Activated CD4-positive, alpha-beta T cell treated with anti-CD3 and anti-CD28 coated beads for 36 hours (primary cell): ENCODE measurements at regions of chr15 and their contacts with region 1.

Region 1: DNA sequence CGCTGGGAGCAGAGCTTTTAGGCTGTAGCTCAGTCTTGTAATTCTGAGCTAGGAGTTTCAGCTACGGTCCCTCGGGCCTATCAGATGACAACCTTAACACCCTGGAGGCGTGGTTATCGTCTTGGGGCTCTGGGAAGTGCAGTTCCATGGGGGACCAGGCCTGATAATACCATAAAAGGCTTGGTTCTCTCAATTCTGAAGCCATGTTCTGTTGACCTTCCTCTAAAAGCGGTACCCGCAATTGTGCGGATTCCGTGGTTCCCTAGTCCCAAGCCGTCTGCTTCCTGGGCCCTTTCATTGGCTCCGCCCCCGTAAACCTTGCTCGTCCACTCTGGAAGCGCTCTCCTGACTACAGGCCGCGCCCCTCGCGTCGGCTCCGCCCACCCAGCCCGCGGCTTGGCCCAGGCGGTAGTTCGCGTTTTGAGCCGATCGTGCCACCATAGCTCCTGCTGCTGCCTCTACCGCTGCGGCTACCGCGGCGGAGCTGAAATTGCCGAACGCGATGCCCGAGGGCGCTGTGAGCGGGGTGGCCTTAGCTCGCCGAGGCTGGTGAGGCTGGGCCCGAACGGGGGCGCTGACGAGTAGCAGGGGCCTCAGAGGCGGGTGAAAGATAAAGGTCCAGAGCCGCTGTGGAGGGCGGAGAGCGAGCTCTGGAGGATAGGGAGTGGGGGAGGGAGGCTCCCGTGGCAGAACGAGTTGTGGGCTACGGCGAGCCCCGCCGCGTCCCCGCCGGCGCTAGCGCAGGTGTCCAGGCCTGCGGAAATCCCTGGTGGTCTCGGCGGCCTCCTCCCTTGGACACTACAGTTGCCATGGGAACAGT is at the start of gene MAPKBP1:
- DNase-seq: peak; percentile 99
- ATAC-seq: peak; percentile 88
- H3K4me3 Mint-ChIP-seq: peak within 1 kb of the TSS; percentile 90
- H3K27ac Mint-ChIP-seq: peak within 1 kb of the TSS; percentile 84
- H3K4me1 Mint-ChIP-seq: peaks cover 56% of the 10 kb centered on the region
- H3K27me3 Mint-ChIP-seq: no peaks in the 10 kb centered on the region
- total RNA-seq, gene MAPKBP1: 16.1 to 19.0 TPM

Region 2: GRCh38 chr15:41493205-41493901 is 280.9 kb before region 1 on chr15 and contains the start of gene ITPKA:
- CTCF ChIA-PET with region 1: no interaction called
- POLR2A ChIA-PET with region 1: interaction called, 3 read pairs
- intact Hi-C with region 1: loop called in 1 of 2 experiments (anchors 1 kb)
- DNase-seq: peak; percentile 97
- ATAC-seq: peak; percentile 85
- H3K4me3 Mint-ChIP-seq: peak within 1 kb of the TSS; percentile 58
- H3K27ac Mint-ChIP-seq: peak within 1 kb of the TSS; percentile 37
- H3K4me1 Mint-ChIP-seq: peaks cover 38% of the 10 kb centered on the region
- H3K27me3 Mint-ChIP-seq: peaks cover 40% of the 10 kb centered on the region
- total RNA-seq, gene ITPKA: 2.5 to 4.2 TPM

Region 3: GRCh38 chr15:41621200-41622193 is 152.8 kb before region 1 on chr15:
- CTCF ChIA-PET with region 1: interaction called, 4 read pairs
- POLR2A ChIA-PET with region 1: no interaction called
- intact Hi-C with region 1: loop called in 1 of 2 experiments (anchors 1 kb)
- DNase-seq: peak; percentile 91
- ATAC-seq: peak; percentile 90
- H3K4me3 Mint-ChIP-seq: peak overlapping the region; percentile 70
- H3K27ac Mint-ChIP-seq: peak overlapping the region; percentile 76
- H3K4me1 Mint-ChIP-seq: peaks cover 11% of the 10 kb centered on the region
- H3K27me3 Mint-ChIP-seq: no peaks in the 10 kb centered on the region

Region 4: DNA sequence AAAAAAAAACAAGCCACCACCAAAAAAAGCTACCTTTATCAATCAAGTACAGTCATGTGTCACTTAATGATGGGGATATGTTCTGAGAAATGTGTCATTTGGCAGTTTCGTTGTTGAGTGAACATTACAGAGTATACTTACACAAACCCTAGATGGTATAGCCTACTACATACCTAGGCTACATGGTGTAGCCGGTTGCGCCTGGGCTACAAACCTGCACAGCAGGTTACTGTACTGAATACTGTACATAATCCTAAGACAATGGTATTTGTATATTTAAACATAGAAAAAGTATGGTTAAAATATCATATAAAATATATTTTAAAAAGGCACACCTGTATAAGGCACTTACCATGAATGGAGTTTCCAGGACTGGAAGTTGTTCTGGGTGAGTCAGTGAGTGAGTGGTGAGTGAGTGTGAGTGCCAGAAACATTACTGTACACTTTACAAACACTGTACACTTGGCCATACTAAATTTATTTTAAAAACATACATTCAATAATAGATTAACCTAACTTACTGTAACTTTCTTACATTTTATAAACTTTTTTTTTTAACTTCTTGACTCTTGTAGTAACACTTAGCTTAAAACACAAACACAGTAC is 27.7 kb after region 1 on chr15:
- CTCF ChIA-PET with region 1: interaction called, 233 read pairs
- POLR2A ChIA-PET with region 1: no interaction called
- intact Hi-C with region 1: no loop called
- DNase-seq: no peak
- ATAC-seq: peak; percentile 37
- H3K4me3 Mint-ChIP-seq: no peak overlapping the region
- H3K27ac Mint-ChIP-seq: no peak overlapping the region
- H3K4me1 Mint-ChIP-seq: peaks cover 17% of the 10 kb centered on the region
- H3K27me3 Mint-ChIP-seq: no peaks in the 10 kb centered on the region

Region 5: DNA sequence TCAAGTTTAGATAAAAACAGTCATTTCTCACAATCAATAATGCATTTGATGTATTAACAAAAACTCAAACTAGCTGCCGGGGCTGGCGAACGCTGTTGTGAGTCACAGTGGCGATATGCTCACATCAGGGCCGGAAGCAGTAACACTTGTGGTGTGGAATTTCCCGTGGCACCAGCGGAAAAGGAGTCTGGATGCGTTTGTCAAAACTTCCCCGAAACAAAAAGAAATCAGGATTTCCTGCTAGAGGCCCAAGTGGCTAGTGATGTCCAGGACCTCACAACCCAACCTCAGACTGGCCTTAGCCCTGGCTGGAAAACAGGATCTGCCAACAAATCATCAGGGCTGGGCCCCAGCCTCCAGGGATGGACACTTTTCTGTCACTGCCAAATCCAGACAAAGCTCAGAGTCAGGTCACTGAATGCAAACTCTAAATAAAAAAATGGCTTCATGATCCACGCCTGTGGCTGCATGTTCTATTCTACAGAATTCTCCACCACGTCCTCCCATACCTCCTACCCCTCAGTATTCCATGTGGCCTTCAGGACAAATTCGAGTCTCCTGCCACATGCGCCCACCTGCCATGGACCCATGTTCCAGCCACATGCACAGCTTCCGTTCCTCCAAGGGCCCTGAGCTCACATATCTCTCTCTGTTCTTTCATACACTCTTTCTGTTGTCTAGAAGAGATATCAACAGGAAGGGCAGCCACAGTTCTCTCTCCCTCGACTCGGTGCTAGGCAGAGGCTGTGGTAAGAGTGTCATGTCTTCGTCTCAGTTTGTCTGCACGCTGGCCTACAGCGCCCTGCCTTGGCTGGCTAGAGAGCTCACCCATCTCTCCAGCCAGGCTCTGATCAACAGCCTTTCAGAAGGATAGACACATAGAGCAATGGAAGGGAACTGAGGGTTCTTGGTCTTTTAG is 162.6 kb after region 1 on chr15:
- CTCF ChIA-PET with region 1: interaction called, 4 read pairs
- POLR2A ChIA-PET with region 1: interaction called, 3 read pairs
- intact Hi-C with region 1: loop called (anchors 1 kb)
- DNase-seq: peak; percentile 91
- ATAC-seq: peak; percentile 62
- H3K4me3 Mint-ChIP-seq: peak overlapping the region; percentile 60
- H3K27ac Mint-ChIP-seq: peak overlapping the region; percentile 100
- H3K4me1 Mint-ChIP-seq: peaks cover 74% of the 10 kb centered on the region
- H3K27me3 Mint-ChIP-seq: no peaks in the 10 kb centered on the region

Region 6: DNA sequence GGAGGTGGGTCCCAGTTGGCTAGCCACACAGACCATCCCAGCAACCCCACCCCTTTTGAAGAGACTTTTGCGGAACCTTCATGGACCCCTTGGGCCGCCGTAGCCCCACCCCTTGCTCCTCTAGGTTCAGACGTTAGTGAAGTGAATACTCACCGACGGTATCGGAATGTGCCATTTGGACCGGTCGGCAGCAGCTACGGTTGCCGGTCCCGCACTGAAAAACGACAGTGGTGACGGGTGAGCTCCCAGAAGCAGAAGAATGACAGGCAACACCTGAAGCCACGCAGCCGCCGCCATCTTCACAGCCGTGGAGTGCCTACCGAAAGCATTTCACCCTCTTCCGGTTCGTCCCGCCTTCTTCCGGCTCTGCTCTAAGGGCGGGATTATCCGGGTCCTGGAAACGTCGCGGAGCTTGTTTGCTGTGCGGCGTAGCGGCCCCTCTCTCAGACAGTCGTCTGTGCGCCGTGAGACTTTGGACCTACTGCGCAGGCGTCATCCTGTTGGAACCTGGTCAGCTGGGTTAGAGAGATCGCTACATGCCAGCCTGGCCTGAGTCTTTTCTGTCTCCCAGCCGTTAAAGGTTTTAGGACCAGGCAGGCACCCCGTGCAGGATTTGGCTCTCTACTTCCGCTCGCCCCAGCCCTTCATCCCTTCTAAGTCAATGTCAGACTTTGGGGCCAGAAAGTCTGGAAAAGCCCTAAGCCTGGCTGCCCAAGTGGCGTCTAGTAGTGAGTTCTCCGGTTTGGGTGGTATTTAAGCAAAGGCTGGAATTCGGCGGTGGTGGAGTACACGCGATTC is 499.0 kb after region 1 on chr15 and contains the starts of genes GANC and TMEM87A:
- CTCF ChIA-PET with region 1: no interaction called
- POLR2A ChIA-PET with region 1: no interaction called
- intact Hi-C with region 1: loop called in 1 of 2 experiments (anchors 1 kb)
- DNase-seq: peak; percentile 98
- ATAC-seq: peak; percentile 96
- H3K4me3 Mint-ChIP-seq: peak within 1 kb of the TSS; percentile 81
- H3K27ac Mint-ChIP-seq: peak within 1 kb of the TSS; percentile 98
- H3K4me1 Mint-ChIP-seq: peaks cover 43% of the 10 kb centered on the region
- H3K27me3 Mint-ChIP-seq: no peaks in the 10 kb centered on the region
- total RNA-seq, gene GANC: 24.5 to 24.8 TPM
- total RNA-seq, gene TMEM87A: 20.5 to 29.0 TPM